ENCODE measurements at regions of chr10 and their contacts with region 1.

Region 1: DNA sequence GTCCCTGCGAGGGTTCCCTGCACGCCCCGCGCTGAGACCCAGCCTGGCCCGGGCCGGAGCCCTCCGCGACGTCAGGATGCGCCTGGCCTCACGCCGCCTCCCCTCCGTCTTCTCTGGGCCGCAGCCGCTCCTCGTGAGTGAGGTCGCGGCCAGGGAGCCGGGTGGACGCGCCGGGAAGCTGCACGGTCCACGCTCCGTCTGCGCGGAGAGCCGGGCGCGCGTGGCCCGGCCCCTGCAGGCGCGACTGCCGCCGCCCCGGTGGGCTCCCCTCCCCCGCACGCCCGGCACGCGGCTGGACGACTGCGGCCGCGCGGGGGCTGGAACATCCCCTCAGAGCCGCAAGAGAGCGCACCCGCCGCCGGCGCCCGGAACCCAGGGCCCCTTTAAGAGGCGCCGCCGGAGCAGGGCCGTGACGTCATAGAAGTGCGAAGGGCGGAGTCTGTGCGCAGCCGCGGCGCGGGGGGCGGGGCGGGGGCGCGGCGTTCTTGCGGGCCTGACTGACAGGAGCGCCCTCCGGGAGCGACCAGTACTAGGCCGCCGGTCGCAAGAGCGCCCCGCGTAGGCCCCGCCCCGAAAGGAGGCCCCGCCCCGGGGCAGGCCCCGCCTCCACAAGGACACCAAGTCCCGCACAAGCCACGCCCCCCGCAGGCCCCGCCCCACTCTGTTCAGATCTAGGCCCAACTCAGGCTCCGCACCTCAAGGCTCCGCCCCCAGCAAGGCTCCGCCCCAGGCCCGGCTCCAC is 445 bp upstream of the INPP5A start:
- DNase-seq: peak; percentile 100
- ATAC-seq: peak; percentile 73 to 79
- H3K4me3 ChIP-seq: peak overlapping the region; percentile 62 to 82 (median 73)
- H3K27ac ChIP-seq: peak overlapping the region; percentile 83 to 94 (median 91)
- H3K4me1 ChIP-seq: peaks cover 52% of the 10 kb centered on the region in 2 donors
- H3K27me3 ChIP-seq: peaks cover 0 to under 1% (median 0%) of the 10 kb centered on the region in 3 donors
- CTCF ChIP-seq: peak in 4 of 5 experiments; percentile 35 to 64 (median 57)
- POLR2A ChIP-seq: peak; percentile 65 to 91

Region 2: DNA sequence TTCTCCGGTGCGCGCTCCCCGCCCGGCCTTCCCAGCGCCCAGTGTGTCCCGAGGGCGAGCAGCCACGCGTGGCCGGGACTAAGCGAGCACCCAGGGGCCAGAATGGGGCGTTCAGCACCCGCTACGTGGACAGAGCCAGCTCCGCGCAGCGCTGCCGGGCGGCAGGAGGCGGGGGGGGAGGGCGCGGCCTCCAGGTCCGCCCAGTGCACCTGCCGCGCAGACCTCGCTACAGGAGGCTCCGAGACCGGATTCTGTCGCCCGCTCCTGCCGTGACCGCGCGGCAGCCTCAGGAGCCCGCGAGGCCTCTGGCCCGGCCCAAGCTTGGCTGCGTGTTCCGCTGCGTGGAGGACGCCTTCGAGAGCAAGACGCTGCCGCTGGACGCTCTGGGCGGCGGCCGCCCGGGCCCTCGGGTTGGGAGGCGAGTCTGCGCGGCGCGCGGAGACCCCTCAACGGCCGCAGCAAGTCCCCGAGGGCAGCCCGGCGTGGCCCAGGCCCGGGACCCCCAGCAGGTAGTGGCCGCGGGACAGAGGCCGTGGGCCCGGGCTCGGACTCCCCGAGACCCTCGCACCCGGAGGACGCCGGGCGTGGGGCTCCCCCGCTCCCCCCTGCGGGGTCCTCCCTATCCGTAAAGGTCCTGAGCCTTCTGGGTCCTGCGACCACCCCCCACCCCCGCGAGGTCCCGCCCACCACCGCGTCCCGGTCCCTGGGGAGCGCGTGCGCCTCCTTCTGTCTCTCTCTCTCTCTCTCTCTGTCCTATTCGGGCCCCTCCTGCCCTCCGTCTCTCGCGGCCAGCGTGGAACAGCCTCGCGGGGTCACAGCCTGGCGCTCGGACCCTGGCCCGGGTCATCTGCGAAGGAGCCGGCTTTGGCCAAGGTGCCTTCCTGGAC is 351.3 kb before region 1 on chr10:
- in situ Hi-C with region 1: no loop called
- intact Hi-C with region 1: no loop called
- DNase-seq: no peak
- ATAC-seq: peak in 1 of 2 donors; percentile 69
- H3K4me3 ChIP-seq: peak overlapping the region; percentile 37 to 61 (median 51)
- H3K27ac ChIP-seq: no peak overlapping the region
- H3K4me1 ChIP-seq: peaks cover 0 to 10% of the 10 kb centered on the region in 2 donors
- H3K27me3 ChIP-seq: peaks cover 37 to 53% (median 41%) of the 10 kb centered on the region in 3 donors
- CTCF ChIP-seq: no peak
- POLR2A ChIP-seq: no peak

Region 3: GRCh38 chr10:132387764-132388210 is 149.4 kb before region 1 on chr10:
- in situ Hi-C with region 1: loop called in 1 of 4 experiments (anchors 25 kb)
- intact Hi-C with region 1: no loop called
- DNase-seq: peak in 1 of 2 donors; percentile 48
- ATAC-seq: peak in 1 of 2 donors; percentile 45
- H3K4me3 ChIP-seq: no peak overlapping the region
- H3K27ac ChIP-seq: peak overlapping the region in 2 of 4 donors; percentile 26 to 57
- H3K4me1 ChIP-seq: peaks cover 0 to 10% of the 10 kb centered on the region in 2 donors
- H3K27me3 ChIP-seq: no peaks in the 10 kb centered on the region
- CTCF ChIP-seq: peak; percentile 48 to 81 (median 74)
- POLR2A ChIP-seq: no peak

Region 4: GRCh38 chr10:132434405-132435005 is 102.6 kb before region 1 on chr10:
- in situ Hi-C with region 1: no loop called
- intact Hi-C with region 1: no loop called
- DNase-seq: no peak
- ATAC-seq: no peak
- H3K4me3 ChIP-seq: no peak overlapping the region
- H3K27ac ChIP-seq: no peak overlapping the region
- H3K4me1 ChIP-seq: no peaks in the 10 kb centered on the region
- H3K27me3 ChIP-seq: no peaks in the 10 kb centered on the region
- CTCF ChIP-seq: no peak
- POLR2A ChIP-seq: no peak

Region 5: GRCh38 chr10:132571650-132572535 is 34.8 kb after region 1 on chr10:
- in situ Hi-C with region 1: no loop called
- intact Hi-C with region 1: loop called (anchors 2 kb)
- DNase-seq: peak; percentile 73 to 87
- ATAC-seq: peak; percentile 100
- H3K4me3 ChIP-seq: no peak overlapping the region
- H3K27ac ChIP-seq: peak overlapping the region; percentile 41 to 78 (median 54)
- H3K4me1 ChIP-seq: peaks cover 34 to 46% of the 10 kb centered on the region in 2 donors
- H3K27me3 ChIP-seq: no peaks in the 10 kb centered on the region
- CTCF ChIP-seq: no peak
- POLR2A ChIP-seq: no peak

Region 6: GRCh38 chr10:132637477-132638129 is 100.5 kb after region 1 on chr10:
- in situ Hi-C with region 1: loop called (anchors 10 to 25 kb)
- intact Hi-C with region 1: no loop called
- DNase-seq: peak in 1 of 2 donors; percentile 12
- ATAC-seq: peak; percentile 72 to 83
- H3K4me3 ChIP-seq: no peak overlapping the region
- H3K27ac ChIP-seq: no peak overlapping the region
- H3K4me1 ChIP-seq: peaks cover 14 to 23% of the 10 kb centered on the region in 2 donors
- H3K27me3 ChIP-seq: no peaks in the 10 kb centered on the region
- CTCF ChIP-seq: peak; percentile 56 to 78 (median 69)
- POLR2A ChIP-seq: no peak

Measured in gastrocnemius medialis (tissue), 4 donors.